ENCODE measurements at regions of chrX and their contacts with region 1.

Region 1: DNA sequence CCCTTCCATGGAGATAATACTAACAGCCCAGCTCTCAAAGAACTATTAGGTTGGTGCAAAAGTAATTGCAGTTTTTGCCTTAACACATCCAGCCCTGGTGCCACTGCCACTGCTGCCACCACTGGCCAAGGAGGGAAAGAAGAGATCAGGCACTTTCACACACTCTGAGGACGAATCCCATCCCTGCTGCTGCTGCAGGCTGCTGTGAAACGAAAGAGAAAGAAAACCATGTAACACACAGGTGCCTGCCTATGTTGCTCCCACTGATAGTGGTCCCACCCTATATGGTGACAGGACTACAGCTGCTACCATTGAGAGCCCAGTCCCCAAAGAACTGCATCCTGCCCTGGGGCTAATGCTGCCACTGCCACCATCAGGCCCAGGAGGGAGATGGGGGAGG is 35.1 kb downstream of the TMLHE start:
- DNase-seq: no peak
- ATAC-seq: no peak
- H3K4me3 ChIP-seq: no peak overlapping the region
- H3K27ac ChIP-seq: no peak overlapping the region
- H3K4me1 ChIP-seq: no peaks in the 10 kb centered on the region
- H3K27me3 ChIP-seq: no peaks in the 10 kb centered on the region
- CTCF ChIP-seq: no peak
- POLR2A ChIP-seq: no peak
- RAD21 ChIP-seq: no peak

Region 2: GRCh38 chrX:155563099-155563498 is 14.6 kb before region 1 on chrX:
- CTCF ChIA-PET with region 1: no interaction called
- POLR2A ChIA-PET with region 1: no interaction called
- dilution Hi-C with region 1: no loop called
- in situ Hi-C with region 1: no loop called
- intact Hi-C with region 1: loop called (anchors 2 kb)
- DNase-seq: no peak
- ATAC-seq: no peak
- H3K4me3 ChIP-seq: no peak overlapping the region
- H3K27ac ChIP-seq: no peak overlapping the region
- H3K4me1 ChIP-seq: no peaks in the 10 kb centered on the region
- H3K27me3 ChIP-seq: no peaks in the 10 kb centered on the region
- CTCF ChIP-seq: no peak
- POLR2A ChIP-seq: no peak
- RAD21 ChIP-seq: no peak